Ascending aorta (tissue), 2 donors: ENCODE measurements at regions of chr19 and their contacts with region 1.

Region 1: DNA sequence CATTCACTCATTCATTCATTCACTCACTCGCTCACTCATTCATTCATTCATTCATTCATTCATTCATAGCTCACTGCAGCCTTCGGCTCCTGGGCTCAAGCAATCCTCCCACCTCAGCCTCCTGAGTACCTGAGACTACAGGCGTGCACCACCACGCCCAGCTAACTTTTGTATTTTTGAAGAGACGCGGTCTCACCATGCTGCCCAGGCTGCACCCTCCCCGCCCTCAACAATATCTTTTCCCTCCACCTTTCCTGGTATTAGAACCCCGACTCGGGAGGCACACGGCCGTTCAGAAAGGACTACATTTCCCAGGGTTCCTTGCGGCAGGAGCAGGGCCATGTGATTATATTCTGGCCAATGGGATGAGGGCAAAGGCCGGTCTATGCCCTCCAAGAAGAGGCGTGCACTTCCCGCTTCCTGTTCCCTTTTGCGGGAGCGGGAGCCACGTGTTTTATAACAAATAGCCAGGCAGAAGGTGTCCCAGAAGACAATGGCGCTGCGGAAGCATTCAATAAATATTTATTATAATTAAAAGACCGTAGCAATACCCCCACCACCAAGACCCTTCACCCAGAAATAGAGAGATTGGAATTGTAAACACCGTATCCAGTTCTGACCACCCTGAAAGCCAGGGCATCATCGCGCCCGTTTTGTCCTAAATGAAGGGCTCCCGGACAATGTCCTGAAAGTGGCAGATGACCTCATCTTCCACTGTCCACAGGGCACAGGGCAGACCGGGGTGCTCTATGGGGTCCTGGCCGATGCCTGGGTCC is 15.9 kb downstream of the TICAM1 start:
- DNase-seq: peak; percentile 76 to 94
- H3K4me3 ChIP-seq: peak overlapping the region in 1 of 2 donors; percentile 32
- H3K27ac ChIP-seq: peak overlapping the region; percentile 49 to 56
- H3K4me1 ChIP-seq: peaks cover 10 to 28% of the 10 kb centered on the region in 2 donors
- H3K27me3 ChIP-seq: no peaks in the 10 kb centered on the region
- CTCF ChIP-seq: no peak

Region 2: DNA sequence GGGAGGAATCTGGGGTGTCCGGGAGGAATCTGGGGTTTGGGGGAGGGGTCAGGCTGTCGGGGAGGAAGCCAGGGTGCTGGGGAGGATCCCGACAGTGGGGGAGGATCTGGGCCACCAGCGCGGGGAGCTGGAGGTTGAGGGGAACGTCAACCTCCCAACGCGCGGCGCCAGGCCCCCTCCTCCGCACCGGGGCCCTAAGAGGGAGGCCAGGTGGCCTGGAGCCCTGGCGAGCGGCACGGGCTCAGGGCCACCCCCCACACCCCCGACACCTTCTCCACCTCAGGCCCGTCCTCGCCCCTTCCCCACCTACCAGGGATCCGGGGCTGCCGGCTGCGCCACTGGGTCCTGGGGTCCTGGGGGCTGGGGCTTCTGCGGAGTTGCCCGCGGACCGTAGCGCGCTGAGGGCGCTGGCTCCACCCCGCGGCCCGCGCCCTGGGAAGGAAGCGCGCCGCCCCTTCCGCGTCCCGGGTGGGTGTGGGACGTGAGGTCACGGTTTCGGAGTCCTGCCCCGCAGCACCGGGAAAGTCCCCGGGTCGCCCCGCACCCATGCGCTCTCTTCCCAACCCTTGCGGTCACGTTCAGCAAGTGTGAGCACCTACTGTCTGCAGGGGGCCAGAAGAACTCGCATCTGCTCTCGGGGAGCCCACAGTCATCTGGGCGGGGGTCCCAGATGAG is 15.8 kb after region 1 on chr19 and contains the start of gene TICAM1:
- intact Hi-C with region 1: loop called (anchors 1 kb)
- DNase-seq: peak; percentile 25 to 83
- H3K4me3 ChIP-seq: peak within 1 kb of the TSS; percentile 94 to 98
- H3K27ac ChIP-seq: peak within 1 kb of the TSS; percentile 96 to 99
- H3K4me1 ChIP-seq: peaks cover 5 to 12% of the 10 kb centered on the region in 2 donors
- H3K27me3 ChIP-seq: no peaks in the 10 kb centered on the region
- CTCF ChIP-seq: peak in 2 of 3 experiments; percentile 14 to 15
- total RNA-seq, gene TICAM1: 20.3 TPM

Region 3: GRCh38 chr19:4867534-4868285 is 52.1 kb after region 1 on chr19 and contains the start of gene PLIN3:
- intact Hi-C with region 1: loop called (anchors 1 kb)
- DNase-seq: peak; percentile 89 to 98
- H3K4me3 ChIP-seq: peak within 1 kb of the TSS; percentile 71 to 83
- H3K27ac ChIP-seq: peak within 1 kb of the TSS; percentile 68 to 81
- H3K4me1 ChIP-seq: peaks cover 5 to 17% of the 10 kb centered on the region in 2 donors
- H3K27me3 ChIP-seq: no peaks in the 10 kb centered on the region
- CTCF ChIP-seq: no peak
- total RNA-seq, gene PLIN3: 84.3 TPM

Region 4: DNA sequence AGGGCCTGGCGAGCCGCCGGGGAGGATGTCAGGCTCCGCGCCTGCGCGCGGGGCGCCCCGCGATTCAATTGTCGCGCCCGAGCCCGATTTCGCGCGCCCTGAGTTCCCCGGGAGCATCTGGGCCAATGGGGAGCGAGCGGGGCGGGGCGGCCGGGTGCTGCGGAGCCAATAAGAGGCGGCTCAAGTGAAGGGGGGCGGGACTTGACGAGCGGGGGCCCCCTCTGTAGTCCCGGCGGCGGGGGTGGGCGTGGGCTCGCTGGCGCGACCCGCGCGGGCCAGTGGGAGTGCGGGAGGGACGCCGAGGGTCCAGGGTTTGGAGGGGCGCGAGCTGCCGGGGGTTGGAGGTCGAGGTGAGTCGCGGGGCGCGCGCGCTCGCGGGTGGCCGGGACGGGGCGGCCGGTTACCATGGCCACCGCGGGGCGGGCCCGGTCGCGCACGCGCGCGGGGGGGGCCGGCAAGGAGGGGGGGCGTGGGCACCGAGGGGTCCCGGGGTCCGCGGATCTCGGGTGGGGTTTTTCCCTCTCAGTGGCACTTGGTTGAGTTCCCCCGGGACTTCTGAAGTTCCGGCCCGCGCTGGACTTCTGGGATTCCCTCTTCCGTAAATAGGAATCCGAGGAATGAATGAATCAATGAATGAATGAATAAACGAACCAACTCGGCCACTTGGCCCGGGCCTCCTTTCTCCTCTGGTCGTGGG is 94.4 kb after region 1 on chr19:
- intact Hi-C with region 1: loop called (anchors 1 kb)
- DNase-seq: peak; percentile 71 to 94
- H3K4me3 ChIP-seq: peak overlapping the region; percentile 76 to 77
- H3K27ac ChIP-seq: no peak overlapping the region
- H3K4me1 ChIP-seq: peaks cover 18 to 22% of the 10 kb centered on the region in 2 donors
- H3K27me3 ChIP-seq: no peaks in the 10 kb centered on the region
- CTCF ChIP-seq: no peak

Region 5: GRCh38 chr19:4968462-4969291 is 153.1 kb after region 1 on chr19 and contains the start of gene KDM4B:
- intact Hi-C with region 1: loop called (anchors 5 kb)
- DNase-seq: peak; percentile 99 to 100
- H3K4me3 ChIP-seq: peak within 1 kb of the TSS; percentile 62 to 90
- H3K27ac ChIP-seq: peak within 1 kb of the TSS; percentile 24 to 40
- H3K4me1 ChIP-seq: peaks cover 9 to 18% of the 10 kb centered on the region in 2 donors
- H3K27me3 ChIP-seq: no peaks in the 10 kb centered on the region
- CTCF ChIP-seq: no peak
- total RNA-seq, gene KDM4B: 46.0 TPM